Endothelial cell of umbilical vein (primary cell): ENCODE measurements at regions of chr19 and their contacts with region 1.

Region 1: GRCh38 chr19:56121180-56122167 is at the start of gene ZNF787:
- DNase-seq: peak; percentile 97
- H3K4me3 ChIP-seq: peak within 1 kb of the TSS; percentile 39 to 60 (median 50)
- H3K27ac ChIP-seq: peak within 1 kb of the TSS; percentile 84
- H3K4me1 ChIP-seq: peaks cover 18% of the 10 kb centered on the region
- H3K27me3 ChIP-seq: no peaks in the 10 kb centered on the region
- CTCF ChIP-seq: no peak
- POLR2A ChIP-seq: peak; percentile 53
- total RNA-seq, gene ZNF787: 31.8 and 32.7 TPM in 2 replicates

Region 2: DNA sequence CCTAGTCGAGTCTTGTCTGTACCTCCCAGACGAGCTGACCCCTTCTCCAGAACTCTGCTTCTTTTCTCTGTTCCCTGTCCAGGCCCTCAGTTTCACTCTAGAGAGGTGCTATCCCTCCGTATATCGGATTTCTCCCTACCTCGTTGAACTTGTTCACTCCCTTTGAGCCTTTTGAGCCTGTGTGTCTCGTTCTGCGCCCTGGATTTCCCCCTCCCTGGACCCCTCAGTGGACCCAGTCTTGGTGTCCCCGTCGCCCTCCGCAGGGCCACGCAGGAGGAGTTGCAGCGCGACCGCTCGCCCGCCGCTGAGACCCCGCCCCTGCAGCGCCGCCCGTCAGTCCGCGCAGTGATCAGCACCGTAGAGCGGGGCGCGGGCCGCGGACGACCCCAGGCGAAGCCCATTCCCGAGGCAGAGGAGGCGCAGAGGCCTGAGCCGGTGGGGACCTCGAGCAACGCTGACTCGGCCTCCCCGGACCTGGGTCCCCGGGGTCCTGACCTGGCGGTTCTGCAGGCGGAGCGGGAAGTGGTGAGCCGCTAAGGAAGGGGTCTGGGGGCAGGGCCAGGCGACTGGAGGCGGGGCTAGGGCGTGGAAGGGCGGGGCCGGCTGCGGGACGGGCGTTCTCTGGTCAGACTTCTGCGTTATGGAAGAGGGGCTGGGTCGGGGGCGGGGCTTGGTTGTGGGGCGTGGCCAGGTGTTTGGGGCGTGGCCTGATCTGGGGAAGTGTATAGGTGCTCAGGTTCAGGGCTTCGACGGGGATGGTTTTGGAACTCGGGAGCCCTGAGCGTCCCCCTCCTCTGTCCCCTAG is 1040.3 kb before region 1 on chr19:
- CTCF ChIA-PET with region 1: no interaction called
- POLR2A ChIA-PET with region 1: no interaction called
- dilution Hi-C with region 1: no loop called
- intact Hi-C with region 1: loop called (anchors 2 kb)
- DNase-seq: peak; percentile 89
- H3K4me3 ChIP-seq: peak overlapping the region; percentile 55 to 67 (median 58)
- H3K27ac ChIP-seq: no peak overlapping the region
- H3K4me1 ChIP-seq: peaks cover 20% of the 10 kb centered on the region
- H3K27me3 ChIP-seq: peaks cover 0 to 3% of the 10 kb centered on the region in 2 experiments
- CTCF ChIP-seq: no peak
- POLR2A ChIP-seq: no peak

Region 3: GRCh38 chr19:55653758-55654539 is 467.5 kb before region 1 on chr19:
- CTCF ChIA-PET with region 1: no interaction called
- POLR2A ChIA-PET with region 1: no interaction called
- dilution Hi-C with region 1: no loop called
- intact Hi-C with region 1: loop called (anchors 10 kb)
- DNase-seq: peak; percentile 99
- H3K4me3 ChIP-seq: peak overlapping the region; percentile 86 to 98 (median 89)
- H3K27ac ChIP-seq: peak overlapping the region; percentile 99
- H3K4me1 ChIP-seq: peaks cover 25% of the 10 kb centered on the region
- H3K27me3 ChIP-seq: no peaks in the 10 kb centered on the region
- CTCF ChIP-seq: peak; percentile 100
- POLR2A ChIP-seq: peak; percentile 79

Region 4: GRCh38 chr19:55866521-55866920 is 255.0 kb before region 1 on chr19:
- CTCF ChIA-PET with region 1: no interaction called
- POLR2A ChIA-PET with region 1: no interaction called
- dilution Hi-C with region 1: no loop called
- intact Hi-C with region 1: no loop called
- DNase-seq: no peak
- H3K4me3 ChIP-seq: no peak overlapping the region
- H3K27ac ChIP-seq: no peak overlapping the region
- H3K4me1 ChIP-seq: no peaks in the 10 kb centered on the region
- H3K27me3 ChIP-seq: no peaks in the 10 kb centered on the region
- CTCF ChIP-seq: no peak
- POLR2A ChIP-seq: no peak

Region 5: DNA sequence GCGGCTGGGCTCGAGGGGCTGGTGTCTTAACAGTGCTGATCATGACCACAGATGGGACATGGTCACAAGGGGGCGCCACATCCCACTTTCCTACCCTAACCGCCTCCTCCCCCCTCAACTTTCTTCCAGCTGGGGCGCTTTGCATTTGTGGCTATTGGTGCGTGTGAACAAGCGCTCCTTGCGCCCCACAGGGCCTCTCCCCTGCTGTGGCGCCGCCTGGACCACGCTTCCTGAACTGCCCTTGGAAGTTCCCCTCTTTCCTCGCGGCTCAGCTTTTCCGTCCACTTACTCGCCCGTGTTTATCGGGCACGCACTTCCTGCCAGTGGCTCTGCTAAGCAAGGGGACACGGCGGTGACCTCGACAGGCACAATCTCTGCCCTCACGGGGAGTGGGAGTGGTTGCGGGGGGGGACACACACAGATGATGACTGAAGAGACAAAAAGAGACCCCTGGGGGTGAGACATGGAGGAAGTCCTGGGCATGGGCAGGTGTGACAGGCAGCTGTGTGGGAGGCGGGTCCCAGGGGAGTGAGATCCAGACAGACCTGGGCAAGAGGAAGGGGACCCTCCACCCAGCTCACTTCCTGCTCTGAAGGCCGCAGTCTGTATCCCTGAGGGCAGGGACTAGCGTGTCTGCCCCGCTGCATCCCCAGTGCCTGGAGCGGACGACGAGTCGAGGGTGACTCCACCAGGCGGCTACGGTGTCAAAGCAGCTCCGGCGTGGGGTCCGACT is 40.6 kb before region 1 on chr19:
- CTCF ChIA-PET with region 1: interaction called, 7 read pairs
- POLR2A ChIA-PET with region 1: interaction called, 5 read pairs
- dilution Hi-C with region 1: no loop called
- intact Hi-C with region 1: loop called (anchors 2 kb)
- DNase-seq: peak; percentile 83
- H3K4me3 ChIP-seq: peak overlapping the region; percentile 10 to 38 (median 32)
- H3K27ac ChIP-seq: no peak overlapping the region
- H3K4me1 ChIP-seq: peaks cover 8% of the 10 kb centered on the region
- H3K27me3 ChIP-seq: peaks cover 0 to 3% of the 10 kb centered on the region in 2 experiments
- CTCF ChIP-seq: peak; percentile 58 to 81
- POLR2A ChIP-seq: no peak

Region 6: DNA sequence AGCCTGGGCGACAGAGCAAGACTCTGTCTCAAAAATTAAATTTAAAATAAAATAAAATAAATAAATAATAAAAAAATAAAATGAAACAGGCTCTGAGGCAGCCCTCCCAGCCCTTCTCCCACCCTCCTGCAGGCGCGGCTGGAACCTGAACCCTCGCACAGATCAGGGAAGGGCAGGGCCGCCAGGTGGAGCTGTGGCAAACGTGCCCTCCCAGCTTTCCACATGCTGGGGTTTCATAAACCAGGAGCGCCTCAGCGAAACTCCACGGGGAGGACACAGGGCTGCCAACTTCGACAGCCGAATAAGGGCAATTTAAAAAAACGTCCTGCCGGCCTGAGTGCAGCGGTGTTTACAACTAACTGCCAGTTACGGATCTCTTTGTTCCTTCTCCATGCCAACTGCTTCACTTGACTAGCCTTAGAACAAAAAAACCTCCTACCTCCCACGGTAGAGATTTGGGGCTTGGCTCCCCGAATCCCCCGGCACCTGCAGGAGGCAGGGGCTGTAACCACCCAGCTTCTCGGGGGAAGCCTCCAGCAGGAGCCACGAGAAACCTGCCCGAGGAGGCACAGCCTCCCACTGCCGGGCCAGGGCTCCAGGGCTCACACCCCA is 16.3 kb before region 1 on chr19:
- CTCF ChIA-PET with region 1: interaction called, 4 read pairs
- POLR2A ChIA-PET with region 1: no interaction called
- dilution Hi-C with region 1: no loop called
- intact Hi-C with region 1: loop called (anchors 1 kb)
- DNase-seq: peak; percentile 54
- H3K4me3 ChIP-seq: no peak overlapping the region
- H3K27ac ChIP-seq: no peak overlapping the region
- H3K4me1 ChIP-seq: peaks cover 4% of the 10 kb centered on the region
- H3K27me3 ChIP-seq: no peaks in the 10 kb centered on the region
- CTCF ChIP-seq: peak; percentile 41 to 68
- POLR2A ChIP-seq: no peak

Region 7: DNA sequence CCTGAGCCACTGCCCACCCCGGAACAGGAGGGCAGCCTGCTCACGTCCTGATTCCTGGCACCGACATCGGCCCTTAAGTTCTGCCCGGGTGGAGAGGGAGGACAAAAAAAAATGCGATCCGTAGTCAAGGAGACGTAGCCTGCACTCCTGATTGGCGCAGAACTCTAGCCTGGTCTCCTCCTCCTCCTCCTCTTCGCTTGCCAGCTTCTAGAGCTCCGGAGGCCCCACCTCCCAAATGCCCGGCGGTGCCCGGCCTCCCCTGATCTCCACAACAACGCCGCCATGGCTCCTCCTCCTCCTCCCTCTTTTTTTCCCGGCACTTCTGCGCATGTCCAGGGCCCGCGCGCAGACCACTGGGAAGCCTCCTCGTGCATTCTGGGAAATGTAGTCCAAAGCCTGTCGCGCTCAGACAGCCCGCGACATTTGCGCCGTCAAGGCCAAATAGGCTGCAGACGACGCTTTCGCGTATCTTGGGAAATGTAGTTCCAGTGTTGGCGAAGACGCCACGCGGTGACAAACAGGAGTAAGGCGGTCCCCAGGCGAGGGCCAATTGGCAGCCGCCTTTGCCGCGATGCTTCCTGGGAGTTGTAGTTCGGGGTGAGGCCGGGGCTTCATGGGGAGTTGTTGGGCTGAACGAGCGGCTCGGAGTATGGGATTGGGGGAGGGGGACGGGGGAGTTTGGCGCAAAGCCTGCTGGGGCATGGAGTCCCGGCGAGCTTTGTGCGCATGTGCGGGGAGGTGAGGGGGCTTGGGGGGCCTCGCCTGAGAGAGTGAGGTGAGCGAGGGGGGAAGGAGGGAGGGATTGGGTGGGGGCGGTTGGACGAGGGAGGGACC is 19.3 kb after region 1 on chr19 and contains the start of gene ZNF444:
- CTCF ChIA-PET with region 1: interaction called, 12 read pairs
- POLR2A ChIA-PET with region 1: interaction called, 10 read pairs
- dilution Hi-C with region 1: no loop called
- intact Hi-C with region 1: loop called (anchors 1 kb)
- DNase-seq: peak; percentile 100
- H3K4me3 ChIP-seq: peak within 1 kb of the TSS; percentile 57 to 73 (median 70)
- H3K27ac ChIP-seq: peak within 1 kb of the TSS; percentile 61
- H3K4me1 ChIP-seq: peaks cover 10% of the 10 kb centered on the region
- H3K27me3 ChIP-seq: no peaks in the 10 kb centered on the region
- CTCF ChIP-seq: no peak
- POLR2A ChIP-seq: peak; percentile 59
- total RNA-seq, gene ZNF444: 37.1 and 37.2 TPM in 2 replicates

Region 8: GRCh38 chr19:56155124-56155687 is 33.7 kb after region 1 on chr19:
- CTCF ChIA-PET with region 1: no interaction called
- POLR2A ChIA-PET with region 1: no interaction called
- dilution Hi-C with region 1: no loop called
- intact Hi-C with region 1: loop called (anchors 1 kb)
- DNase-seq: no peak
- H3K4me3 ChIP-seq: no peak overlapping the region
- H3K27ac ChIP-seq: no peak overlapping the region
- H3K4me1 ChIP-seq: peaks cover 10% of the 10 kb centered on the region
- H3K27me3 ChIP-seq: no peaks in the 10 kb centered on the region
- CTCF ChIP-seq: peak; percentile 24 to 40
- POLR2A ChIP-seq: no peak